Ascending aorta (tissue), 2 donors: ENCODE measurements at regions of chr19 and their contacts with region 1.

Region 1: GRCh38 chr19:34253699-34254551 is 429 bp upstream of the GARRE1 start:
- DNase-seq: peak; percentile 34 to 90
- H3K4me3 ChIP-seq: peak overlapping the region; percentile 81 to 83
- H3K27ac ChIP-seq: peak overlapping the region; percentile 95 to 98
- H3K4me1 ChIP-seq: peaks cover 0 to 18% of the 10 kb centered on the region in 2 donors
- H3K27me3 ChIP-seq: no peaks in the 10 kb centered on the region
- CTCF ChIP-seq: no peak

Region 2: DNA sequence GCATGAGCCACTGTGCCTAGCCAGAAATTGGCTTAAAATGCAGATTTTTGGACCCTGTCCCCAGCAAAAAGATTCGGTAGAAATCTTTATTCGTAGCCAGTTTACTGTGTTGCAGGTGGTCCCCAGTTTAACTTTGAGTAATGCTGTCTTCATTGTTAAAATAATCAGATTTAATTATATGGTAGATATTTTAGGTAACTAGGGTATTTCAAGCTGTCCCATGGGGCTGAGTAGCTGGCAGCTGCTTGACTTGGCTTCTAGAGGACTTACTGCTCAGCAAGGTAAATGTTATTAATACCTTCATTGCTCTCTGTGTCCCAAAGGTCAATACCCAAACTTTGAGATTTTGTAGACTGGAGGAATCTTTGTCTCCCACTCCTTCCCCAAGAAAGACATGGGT is 60.5 kb before region 1 on chr19:
- intact Hi-C with region 1: no loop called
- DNase-seq: no peak
- H3K4me3 ChIP-seq: no peak overlapping the region
- H3K27ac ChIP-seq: no peak overlapping the region
- H3K4me1 ChIP-seq: peaks cover 0 to 18% of the 10 kb centered on the region in 2 donors
- H3K27me3 ChIP-seq: no peaks in the 10 kb centered on the region
- CTCF ChIP-seq: no peak

Region 3: GRCh38 chr19:34288381-34288780 is 34.5 kb after region 1 on chr19:
- intact Hi-C with region 1: no loop called
- DNase-seq: no peak
- H3K4me3 ChIP-seq: no peak overlapping the region
- H3K27ac ChIP-seq: no peak overlapping the region
- H3K4me1 ChIP-seq: peaks cover 0 to 13% of the 10 kb centered on the region in 2 donors
- H3K27me3 ChIP-seq: no peaks in the 10 kb centered on the region
- CTCF ChIP-seq: no peak

Region 4: GRCh38 chr19:34336781-34337271 is 82.9 kb after region 1 on chr19:
- intact Hi-C with region 1: loop called (anchors 5 kb)
- DNase-seq: peak in 1 of 2 donors; percentile 12
- H3K4me3 ChIP-seq: no peak overlapping the region
- H3K27ac ChIP-seq: peak overlapping the region; percentile 50 to 56
- H3K4me1 ChIP-seq: peaks cover 0 to 8% of the 10 kb centered on the region in 2 donors
- H3K27me3 ChIP-seq: no peaks in the 10 kb centered on the region
- CTCF ChIP-seq: peak; percentile 51 to 64 (median 60)